ENCODE measurements at regions of chr9 and their contacts with region 1.

Region 1: DNA sequence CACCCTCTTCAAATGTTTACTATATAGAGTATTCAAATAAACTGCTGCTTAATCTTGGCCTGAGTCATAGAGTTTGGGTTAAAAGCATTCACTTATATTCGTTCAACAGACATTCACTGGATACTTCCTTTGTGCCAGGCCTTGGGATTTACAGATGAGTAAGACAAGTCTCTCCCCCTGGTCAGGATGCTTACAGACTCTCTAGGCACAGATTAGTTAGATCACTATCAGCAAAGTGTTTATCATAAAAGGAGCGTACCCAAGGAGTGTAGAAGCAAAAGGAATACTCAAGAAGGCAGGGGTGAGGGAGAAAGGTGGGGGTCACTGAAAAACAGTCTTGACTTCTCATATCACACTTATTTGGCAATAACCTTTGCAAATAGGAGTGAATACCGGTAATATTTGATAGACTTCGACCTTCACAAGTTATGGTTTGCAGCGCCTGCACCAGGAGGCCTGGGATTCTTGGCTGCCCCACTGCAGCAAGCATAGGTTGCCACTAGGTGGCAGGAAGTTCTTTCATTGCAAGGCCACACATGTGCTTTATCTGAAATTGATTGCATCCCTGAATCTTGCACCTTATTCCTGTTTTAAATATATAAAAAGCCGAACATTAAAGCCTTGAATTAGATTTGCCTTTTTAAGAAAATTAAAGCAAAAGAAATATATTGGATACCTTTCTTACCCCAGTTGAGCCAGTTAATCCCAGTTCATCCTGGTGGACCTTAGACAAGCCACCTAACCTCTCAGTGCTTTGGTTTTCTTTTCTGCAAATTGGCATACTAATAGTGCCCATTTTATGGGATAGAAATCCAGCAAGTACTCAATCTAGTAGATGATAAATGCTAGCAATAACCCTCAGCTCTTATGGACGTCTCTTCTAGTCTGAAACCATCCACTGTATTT is 6.5 kb upstream of the TRMT10B start:
- DNase-seq: peak; percentile 42 to 95 (median 66)

Region 2: DNA sequence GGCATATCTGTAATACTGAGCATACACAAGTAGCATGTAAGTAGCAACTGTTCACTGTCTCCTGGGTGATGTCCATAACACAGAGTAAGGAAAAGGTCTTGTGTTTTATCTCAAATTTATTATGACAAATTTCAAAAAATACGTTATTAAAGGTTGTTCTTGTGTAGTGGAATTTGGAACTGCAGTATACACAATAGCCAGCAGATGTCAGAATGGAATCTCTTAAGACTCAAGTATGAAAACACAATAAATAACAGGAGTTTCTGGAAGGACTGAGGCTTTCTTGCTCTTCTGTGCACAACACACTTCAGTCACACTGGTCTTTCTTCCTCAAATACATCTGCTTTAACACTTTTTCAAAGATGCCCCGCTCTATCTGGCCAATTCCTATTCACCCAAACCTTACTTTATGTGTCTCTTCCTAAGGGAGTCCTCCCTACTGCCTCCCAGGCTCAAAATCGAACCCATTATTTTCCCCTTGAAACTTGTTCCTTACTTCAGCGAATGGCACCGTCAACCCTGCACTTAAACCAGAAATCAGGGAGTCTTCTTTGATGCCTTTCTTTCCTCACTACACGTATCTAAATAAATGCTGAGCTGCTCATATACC is 164.4 kb before region 1 on chr9:
- intact Hi-C with region 1: loop called (anchors 5 kb)
- DNase-seq: no peak

Region 3: DNA sequence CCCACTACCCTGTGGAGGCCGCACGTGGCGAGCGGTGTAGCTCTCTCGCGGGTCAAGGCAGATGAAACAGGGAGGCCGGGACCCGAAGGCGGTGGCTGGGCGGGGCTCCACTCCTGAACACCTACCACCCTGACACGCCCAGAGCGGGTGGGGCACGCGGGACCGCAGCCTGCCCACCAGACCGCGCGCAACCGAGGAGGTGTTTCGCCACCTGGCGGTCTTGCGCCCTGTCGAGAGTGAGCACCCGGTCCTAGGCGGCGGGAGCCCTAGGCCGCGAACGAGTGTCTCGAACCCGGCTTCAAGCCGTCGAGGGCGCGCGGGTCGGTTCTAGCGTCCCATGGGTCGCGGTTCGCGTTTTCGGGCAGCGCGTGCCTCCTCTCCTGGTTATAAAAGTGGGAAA is 40.0 kb after region 1 on chr9:
- intact Hi-C with region 1: no loop called
- DNase-seq: peak in 2 of 10 donors; percentile 56 to 80

Region 4: GRCh38 chr9:37938121-37938891 is 191.2 kb after region 1 on chr9:
- intact Hi-C with region 1: no loop called
- DNase-seq: peak in 5 of 10 donors; percentile 37 to 84 (median 63)

Measured in posterior cingulate gyrus (tissue), 11 donors.